WTC11 (cell line): ENCODE measurements at regions of chr11 and their contacts with region 1.

Region 1: GRCh38 chr11:20355221-20356219 is 8.0 kb upstream of the HTATIP2 start:
- DNase-seq: peak; percentile 46
- ATAC-seq: peak; percentile 87
- H3K4me3 Mint-ChIP-seq: no peak overlapping the region
- H3K27ac Mint-ChIP-seq: no peak overlapping the region
- H3K4me1 Mint-ChIP-seq: 0 out of 2 replicates have a peak, but pooled peaks cover 4% of the 10 kb centered on the region
- H3K27me3 Mint-ChIP-seq: peaks cover 29% of the 10 kb centered on the region
- CTCF ChIP-seq: peak; percentile 40; the same call in 1 of the 2 replicates

Region 2: GRCh38 chr11:20162824-20163782 is 192.4 kb before region 1 on chr11:
- CTCF ChIA-PET with region 1: interaction called, 18 read pairs
- POLR2A ChIA-PET with region 1: no interaction called
- DNase-seq: peak; percentile 69
- ATAC-seq: peak; percentile 34
- H3K4me3 Mint-ChIP-seq: peak overlapping the region; percentile 74
- H3K27ac Mint-ChIP-seq: no peak overlapping the region
- H3K4me1 Mint-ChIP-seq: peaks cover 68% of the 10 kb centered on the region
- H3K27me3 Mint-ChIP-seq: peaks cover 100% of the 10 kb centered on the region
- CTCF ChIP-seq: no peak

Region 3: GRCh38 chr11:20337526-20338154 is 17.9 kb before region 1 on chr11:
- CTCF ChIA-PET with region 1: interaction called, 31 read pairs
- POLR2A ChIA-PET with region 1: no interaction called
- DNase-seq: peak; percentile 36
- ATAC-seq: peak; percentile 85
- H3K4me3 Mint-ChIP-seq: no peak overlapping the region
- H3K27ac Mint-ChIP-seq: no peak overlapping the region
- H3K4me1 Mint-ChIP-seq: peaks cover 20% of the 10 kb centered on the region
- H3K27me3 Mint-ChIP-seq: peaks cover 7% of the 10 kb centered on the region
- CTCF ChIP-seq: no peak